Activated T-helper 1 cell treated with anti-CD3 and anti-CD28 coated beads, Interleukin-12 subunit alpha, Interleukin-12 subunit beta, Interleukin-2, Interleukin-4 antibody, amounts not matched to agents 30 ng/mL and 10 ng/mL and 1 ng/mL, durations not matched to agents 14 hours and 24 hours and 36 hours (primary cell): ENCODE measurements at regions of chr7 and their contacts with region 1.

Region 1: GRCh38 chr7:114085592-114086501 is 167.0 kb upstream of the PPP1R3A start:
- DNase-seq: no peak
- H3K4me3 Mint-ChIP-seq: peak overlapping the region; percentile 83
- H3K27ac Mint-ChIP-seq: peak overlapping the region; percentile 81
- H3K4me1 Mint-ChIP-seq: peaks cover 39% of the 10 kb centered on the region
- H3K27me3 Mint-ChIP-seq: peaks cover 75% of the 10 kb centered on the region

Region 2: DNA sequence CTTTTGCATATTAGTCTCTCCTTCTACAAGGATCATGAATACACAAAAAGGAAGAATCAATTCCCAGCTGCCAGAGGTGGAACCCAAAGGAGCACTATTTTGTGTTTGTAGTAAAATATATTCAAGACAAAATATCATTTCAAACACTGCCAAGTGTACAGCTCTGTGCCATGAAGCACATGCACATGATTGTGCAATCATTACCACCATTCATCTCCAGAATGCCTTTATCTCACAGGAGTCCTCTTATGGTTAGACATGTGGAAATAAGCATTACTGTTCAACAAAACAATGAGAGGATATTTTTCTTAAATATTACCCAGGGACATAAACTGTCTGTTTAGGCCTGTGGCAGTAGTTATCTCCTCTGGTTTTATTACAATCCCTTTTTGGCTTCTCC is 15.6 kb before region 1 on chr7:
- intact Hi-C with region 1: no loop called
- DNase-seq: no peak
- H3K4me3 Mint-ChIP-seq: no peak overlapping the region
- H3K27ac Mint-ChIP-seq: no peak overlapping the region
- H3K4me1 Mint-ChIP-seq: no peaks in the 10 kb centered on the region
- H3K27me3 Mint-ChIP-seq: peaks cover 11% of the 10 kb centered on the region

Region 3: DNA sequence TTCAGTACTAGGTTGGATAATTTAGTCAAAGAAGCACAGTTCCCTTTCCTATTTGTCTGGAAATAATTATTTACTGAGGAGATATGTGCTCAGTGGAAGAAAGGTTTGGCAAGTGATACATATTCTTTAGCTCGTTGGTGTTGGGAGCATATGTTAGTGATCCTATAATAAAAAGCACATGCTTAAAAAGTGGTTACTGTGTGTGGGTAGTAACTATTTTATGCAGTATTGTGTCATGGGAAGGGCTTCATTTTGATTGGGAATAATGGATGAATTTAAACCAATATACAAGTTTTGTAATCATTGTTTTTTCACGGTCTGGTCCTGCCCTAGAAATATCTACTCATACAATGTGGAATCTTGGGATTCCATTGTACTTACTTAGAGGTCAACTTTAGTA is 21.7 kb after region 1 on chr7:
- intact Hi-C with region 1: no loop called
- DNase-seq: no peak
- H3K4me3 Mint-ChIP-seq: no peak overlapping the region
- H3K27ac Mint-ChIP-seq: no peak overlapping the region
- H3K4me1 Mint-ChIP-seq: no peaks in the 10 kb centered on the region
- H3K27me3 Mint-ChIP-seq: peaks cover 4% of the 10 kb centered on the region

Region 4: DNA sequence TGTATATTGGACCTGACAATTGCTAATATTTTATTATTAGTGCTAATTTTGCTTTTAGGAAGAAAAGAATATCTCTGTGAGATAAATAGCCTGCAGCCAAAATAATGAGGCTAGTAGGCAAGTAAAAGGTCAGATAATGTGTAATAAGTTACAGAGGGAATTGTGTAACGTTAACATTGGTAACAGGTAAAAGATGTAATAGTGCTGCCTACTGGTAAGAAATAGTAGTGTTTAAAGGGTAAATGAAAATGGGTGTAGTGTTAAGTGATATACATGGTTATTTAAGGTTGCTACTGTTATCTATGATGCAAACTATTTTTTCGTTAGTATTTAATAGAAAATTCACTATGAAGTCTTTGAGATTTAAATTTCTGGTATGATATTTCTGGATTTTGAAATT is 319.6 kb after region 1 on chr7:
- intact Hi-C with region 1: loop called (anchors 10 kb)
- DNase-seq: no peak
- H3K4me3 Mint-ChIP-seq: no peak overlapping the region
- H3K27ac Mint-ChIP-seq: no peak overlapping the region
- H3K4me1 Mint-ChIP-seq: no peaks in the 10 kb centered on the region
- H3K27me3 Mint-ChIP-seq: no peaks in the 10 kb centered on the region

Region 5: DNA sequence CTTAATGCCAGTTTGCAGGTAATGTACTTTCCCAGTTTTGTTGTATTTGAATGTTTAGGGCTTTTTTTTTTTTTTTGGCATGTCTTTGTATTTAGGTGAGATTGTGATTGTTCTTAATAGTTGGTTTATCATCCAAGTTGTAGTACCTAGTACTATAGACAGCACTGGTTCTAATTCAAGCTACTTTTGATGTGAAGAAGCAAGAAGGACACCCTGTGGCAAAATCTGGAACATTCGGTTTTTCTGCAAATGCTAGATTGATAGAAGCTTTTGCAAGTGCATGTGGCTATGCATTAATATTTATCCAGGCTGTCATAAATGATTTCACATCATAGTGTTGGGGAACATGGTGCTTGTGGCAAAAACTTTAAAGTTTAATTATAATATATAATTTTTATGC is 577.7 kb after region 1 on chr7:
- intact Hi-C with region 1: loop called (anchors 10 kb)
- DNase-seq: no peak
- H3K4me3 Mint-ChIP-seq: no peak overlapping the region
- H3K27ac Mint-ChIP-seq: no peak overlapping the region
- H3K4me1 Mint-ChIP-seq: no peaks in the 10 kb centered on the region
- H3K27me3 Mint-ChIP-seq: peaks cover 1% of the 10 kb centered on the region

Region 6: GRCh38 chr7:115475761-115476385 is 1390.0 kb after region 1 on chr7:
- intact Hi-C with region 1: loop called (anchors 10 kb)
- DNase-seq: no peak
- H3K4me3 Mint-ChIP-seq: no peak overlapping the region
- H3K27ac Mint-ChIP-seq: no peak overlapping the region
- H3K4me1 Mint-ChIP-seq: peaks cover 7% of the 10 kb centered on the region
- H3K27me3 Mint-ChIP-seq: peaks cover 26% of the 10 kb centered on the region

Region 7: GRCh38 chr7:115851291-115851690 is 1765.4 kb after region 1 on chr7:
- intact Hi-C with region 1: loop called (anchors 2 kb)
- DNase-seq: no peak
- H3K4me3 Mint-ChIP-seq: no peak overlapping the region
- H3K27ac Mint-ChIP-seq: no peak overlapping the region
- H3K4me1 Mint-ChIP-seq: no peaks in the 10 kb centered on the region
- H3K27me3 Mint-ChIP-seq: no peaks in the 10 kb centered on the region

Region 8: GRCh38 chr7:115910541-115911164 is 1824.8 kb after region 1 on chr7:
- intact Hi-C with region 1: loop called (anchors 1 kb)
- DNase-seq: no peak
- H3K4me3 Mint-ChIP-seq: no peak overlapping the region
- H3K27ac Mint-ChIP-seq: no peak overlapping the region
- H3K4me1 Mint-ChIP-seq: no peaks in the 10 kb centered on the region
- H3K27me3 Mint-ChIP-seq: peaks cover 3% of the 10 kb centered on the region